ENCODE measurements at regions of chr10 and their contacts with region 1.

Region 1: GRCh38 chr10:84293574-84294016 is 34.8 kb upstream of the CCSER2 start:
- DNase-seq: peak; percentile 36
- H3K4me3 Mint-ChIP-seq: no peak overlapping the region
- H3K27ac Mint-ChIP-seq: no peak overlapping the region
- H3K4me1 Mint-ChIP-seq: peaks cover 26% of the 10 kb centered on the region
- H3K27me3 Mint-ChIP-seq: peaks cover 41% of the 10 kb centered on the region

Region 2: GRCh38 chr10:84179059-84179710 is 114.4 kb before region 1 on chr10:
- intact Hi-C with region 1: no loop called
- DNase-seq: no peak
- H3K4me3 Mint-ChIP-seq: no peak overlapping the region
- H3K27ac Mint-ChIP-seq: no peak overlapping the region
- H3K4me1 Mint-ChIP-seq: peaks cover 4% of the 10 kb centered on the region
- H3K27me3 Mint-ChIP-seq: no peaks in the 10 kb centered on the region

Region 3: GRCh38 chr10:84308481-84309304 is 15.1 kb after region 1 on chr10:
- intact Hi-C with region 1: loop called (anchors 1 kb)
- DNase-seq: peak; percentile 29
- H3K4me3 Mint-ChIP-seq: peak overlapping the region; percentile 5
- H3K27ac Mint-ChIP-seq: peak overlapping the region; percentile 10
- H3K4me1 Mint-ChIP-seq: peaks cover 32% of the 10 kb centered on the region
- H3K27me3 Mint-ChIP-seq: peaks cover 10% of the 10 kb centered on the region

Region 4: GRCh38 chr10:84321902-84322301 is 28.3 kb after region 1 on chr10:
- intact Hi-C with region 1: no loop called
- DNase-seq: no peak
- H3K4me3 Mint-ChIP-seq: no peak overlapping the region
- H3K27ac Mint-ChIP-seq: no peak overlapping the region
- H3K4me1 Mint-ChIP-seq: peaks cover 6% of the 10 kb centered on the region
- H3K27me3 Mint-ChIP-seq: peaks cover 25% of the 10 kb centered on the region